ENCODE measurements at regions of chr9 and their contacts with region 1.

Region 1: DNA sequence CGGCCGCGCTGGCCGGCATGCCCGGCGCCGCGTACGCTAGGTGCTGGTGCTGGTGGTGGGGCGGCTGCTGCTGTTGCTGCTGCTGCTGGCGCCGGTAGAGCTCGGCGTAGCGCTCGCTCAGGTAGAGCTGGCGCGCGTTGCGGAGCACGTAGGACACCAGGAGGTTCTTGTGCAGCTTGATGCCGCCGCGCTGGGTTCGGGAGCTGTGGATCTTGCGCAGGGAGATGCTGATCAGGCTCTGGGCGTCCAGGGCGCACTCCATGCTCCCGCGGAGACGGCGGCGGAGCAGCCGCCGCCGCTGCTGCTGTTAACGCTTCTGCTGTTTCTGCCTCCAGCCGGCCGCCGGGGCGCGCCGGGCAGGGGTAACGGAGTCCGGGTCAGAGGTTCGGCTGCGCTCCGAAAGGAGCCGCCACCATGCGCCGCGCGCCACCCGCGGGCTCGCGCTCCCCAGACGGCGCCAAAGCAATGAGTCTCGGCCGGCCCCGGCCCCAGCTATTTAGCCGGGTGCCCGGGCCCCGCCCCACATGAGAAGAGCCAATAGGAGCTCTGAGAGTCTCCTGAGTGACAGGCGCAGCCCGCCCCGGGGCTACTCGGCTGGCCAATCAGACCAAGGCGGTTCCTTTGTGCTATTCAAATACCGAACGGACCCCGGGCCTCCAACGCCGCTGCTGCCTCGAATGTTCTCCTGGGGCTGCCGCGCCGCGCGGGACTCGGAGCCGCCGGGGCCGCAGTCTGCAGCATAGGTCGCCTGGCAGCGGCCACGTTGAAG is at the start of gene IER5L:
- DNase-seq: peak; percentile 94
- ATAC-seq: peak; percentile 70
- H3K4me3 ChIP-seq: peak within 1 kb of the TSS; percentile 89
- H3K27ac ChIP-seq: peak within 1 kb of the TSS; percentile 97
- H3K4me1 ChIP-seq: peaks cover 9% of the 10 kb centered on the region
- H3K27me3 ChIP-seq: no peaks in the 10 kb centered on the region
- CTCF ChIP-seq: 0 out of 2 replicates have a peak, but pooled peaks have one; percentile 3
- POLR2A ChIP-seq: peak; percentile 100
- RAD21 ChIP-seq: 0 out of 2 replicates have a peak, but pooled peaks have one; percentile 4
- total RNA-seq, gene IER5L: 12.5 and 14.4 TPM in 2 replicates

Region 2: DNA sequence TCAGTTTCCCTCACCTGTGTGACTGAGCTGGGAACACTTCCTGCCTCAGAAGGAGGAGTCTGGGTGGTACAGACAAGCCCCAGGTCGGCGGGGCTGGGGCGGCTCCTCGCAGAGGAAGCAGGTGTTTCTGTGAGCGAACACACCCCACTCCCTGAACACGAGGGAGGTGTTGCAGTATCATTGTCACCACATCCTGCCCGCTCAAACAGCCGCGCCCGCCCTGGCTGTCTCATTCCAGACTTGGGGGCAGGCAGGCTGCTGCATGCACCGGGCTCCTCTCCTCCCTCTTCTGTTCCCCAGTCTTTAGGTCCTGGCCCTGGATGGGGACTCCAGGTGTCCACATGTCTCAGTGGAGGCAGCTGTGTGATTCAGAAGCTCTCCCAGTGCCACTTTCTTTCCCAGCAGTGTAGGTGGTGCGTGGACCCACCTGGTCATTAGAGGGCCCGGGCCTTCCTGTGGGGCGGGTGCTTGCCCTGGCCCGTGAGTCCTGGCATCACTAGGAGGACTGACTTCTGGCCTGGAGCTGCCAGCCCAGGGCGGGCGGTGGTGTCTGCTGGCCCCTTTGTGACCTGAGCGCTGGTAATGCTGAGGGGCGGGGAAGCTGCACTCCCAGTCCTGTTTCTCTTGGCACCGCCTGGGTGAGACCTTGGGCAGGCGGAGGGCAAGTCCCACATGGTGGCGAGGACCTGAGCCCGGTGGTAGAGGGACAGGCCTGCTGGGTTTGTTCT is 275.5 kb before region 1 on chr9:
- CTCF ChIA-PET with region 1: no interaction called
- POLR2A ChIA-PET with region 1: no interaction called
- dilution Hi-C with region 1: no loop called
- in situ Hi-C with region 1: no loop called
- intact Hi-C with region 1: no loop called
- DNase-seq: no peak
- ATAC-seq: no peak
- H3K4me3 ChIP-seq: no peak overlapping the region
- H3K27ac ChIP-seq: no peak overlapping the region
- H3K4me1 ChIP-seq: peaks cover 4% of the 10 kb centered on the region
- H3K27me3 ChIP-seq: no peaks in the 10 kb centered on the region
- CTCF ChIP-seq: no peak
- POLR2A ChIP-seq: no peak
- RAD21 ChIP-seq: no peak

Region 3: GRCh38 chr9:129068990-129069861 is 108.7 kb before region 1 on chr9:
- CTCF ChIA-PET with region 1: no interaction called
- POLR2A ChIA-PET with region 1: interaction called, 12 read pairs
- dilution Hi-C with region 1: no loop called
- in situ Hi-C with region 1: no loop called
- intact Hi-C with region 1: no loop called
- DNase-seq: no peak
- ATAC-seq: no peak
- H3K4me3 ChIP-seq: no peak overlapping the region
- H3K27ac ChIP-seq: no peak overlapping the region
- H3K4me1 ChIP-seq: no peaks in the 10 kb centered on the region
- H3K27me3 ChIP-seq: no peaks in the 10 kb centered on the region
- CTCF ChIP-seq: no peak
- POLR2A ChIP-seq: no peak
- RAD21 ChIP-seq: no peak

Region 4: DNA sequence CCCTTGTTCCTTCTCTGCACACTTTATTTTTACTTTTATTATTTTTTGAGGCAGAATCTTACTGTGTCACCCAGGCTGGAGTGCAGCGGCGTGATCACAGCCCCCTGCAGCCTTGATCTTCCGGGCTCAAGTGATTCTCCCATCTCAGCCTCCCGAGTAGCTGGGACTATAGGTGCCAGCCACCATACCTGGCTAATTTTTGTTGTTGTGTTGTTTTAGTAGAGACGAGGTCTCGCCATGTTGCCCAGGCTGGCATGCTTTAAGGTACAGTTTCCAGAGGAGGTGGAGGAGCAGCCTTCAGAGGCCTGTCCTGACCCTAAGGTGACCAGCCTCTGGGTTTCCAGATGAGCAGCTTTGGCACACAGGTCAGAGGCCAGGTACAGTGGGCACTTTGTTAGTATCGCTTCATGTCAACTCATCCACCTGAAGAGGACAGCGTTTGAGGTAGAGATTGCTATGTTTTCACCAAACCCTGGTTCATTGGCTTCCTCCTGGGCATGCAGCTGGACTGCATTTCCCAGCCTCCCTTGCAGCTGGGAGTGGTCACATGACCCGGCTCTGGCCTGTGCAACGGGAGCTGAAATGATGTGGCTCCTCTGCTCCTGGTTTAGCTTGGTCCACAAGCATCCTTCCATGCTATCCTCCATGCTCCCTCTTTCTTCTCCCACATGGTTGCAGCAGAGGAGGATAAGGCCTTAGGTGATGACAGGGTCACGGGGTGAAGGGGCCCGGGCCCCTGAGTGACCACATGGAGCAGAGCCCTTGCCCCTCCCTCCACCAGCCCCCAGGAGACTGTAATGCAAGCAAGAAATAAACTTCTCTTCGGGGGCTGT is 139.4 kb after region 1 on chr9:
- CTCF ChIA-PET with region 1: interaction called, 3 read pairs
- POLR2A ChIA-PET with region 1: no interaction called
- dilution Hi-C with region 1: no loop called
- in situ Hi-C with region 1: no loop called
- intact Hi-C with region 1: loop called (anchors 5 kb)
- DNase-seq: peak; percentile 45
- ATAC-seq: peak; percentile 25; the same call in 1 of the 2 replicates
- H3K4me3 ChIP-seq: no peak overlapping the region
- H3K27ac ChIP-seq: peak overlapping the region; percentile 26; the same call in 1 of the 2 replicates
- H3K4me1 ChIP-seq: peaks cover 29% of the 10 kb centered on the region
- H3K27me3 ChIP-seq: no peaks in the 10 kb centered on the region
- CTCF ChIP-seq: no peak
- POLR2A ChIP-seq: no peak
- RAD21 ChIP-seq: no peak

Region 5: GRCh38 chr9:129413537-129414376 is 235.8 kb after region 1 on chr9:
- CTCF ChIA-PET with region 1: no interaction called
- POLR2A ChIA-PET with region 1: no interaction called
- dilution Hi-C with region 1: no loop called
- in situ Hi-C with region 1: no loop called
- intact Hi-C with region 1: loop called (anchors 2 kb)
- DNase-seq: peak; percentile 94
- ATAC-seq: peak; percentile 92
- H3K4me3 ChIP-seq: peak overlapping the region; percentile 32
- H3K27ac ChIP-seq: peak overlapping the region; percentile 99
- H3K4me1 ChIP-seq: peaks cover 21% of the 10 kb centered on the region
- H3K27me3 ChIP-seq: no peaks in the 10 kb centered on the region
- CTCF ChIP-seq: no peak
- POLR2A ChIP-seq: peak; percentile 46; the same call in 1 of the 2 replicates
- RAD21 ChIP-seq: no peak; the same call in 1 of the 2 replicates

Region 6: DNA sequence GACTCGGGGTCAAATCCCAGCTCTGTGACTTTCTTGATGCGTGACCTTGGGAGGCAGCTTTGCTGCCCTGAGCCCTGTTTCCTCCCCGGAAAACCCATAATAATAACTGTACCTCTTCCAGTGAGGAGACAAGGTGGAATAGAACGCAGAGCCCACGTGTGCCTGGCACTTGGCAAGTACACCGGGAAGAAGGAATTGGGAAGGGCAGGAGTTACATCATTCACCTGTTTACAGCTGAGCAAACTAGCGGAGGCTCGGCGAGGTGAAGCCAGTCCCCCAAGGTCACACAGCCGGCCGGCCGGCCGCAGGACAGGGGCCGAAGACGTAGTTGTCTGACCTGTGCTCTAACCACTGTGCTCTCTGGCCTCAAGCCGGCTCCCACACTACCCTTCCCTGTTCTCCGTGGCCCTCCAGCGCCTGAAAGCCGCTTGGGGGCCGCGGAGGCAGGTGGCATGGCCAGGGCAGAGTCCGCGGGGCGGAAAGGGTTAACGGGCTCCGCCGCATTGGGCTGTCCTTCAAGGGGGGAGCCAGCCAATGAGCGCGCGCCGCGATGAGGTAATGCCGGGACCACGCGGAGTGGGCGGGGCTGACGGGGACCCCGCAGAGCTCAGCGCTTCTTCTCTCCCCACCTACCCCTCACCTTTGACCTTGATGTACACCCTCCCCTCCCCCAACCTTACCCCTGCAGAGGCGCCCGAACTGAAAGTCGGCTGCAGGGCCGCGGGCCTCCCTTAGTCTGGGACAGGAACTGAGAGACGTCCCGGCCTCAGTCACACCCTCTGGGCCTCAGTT is 317.8 kb after region 1 on chr9:
- CTCF ChIA-PET with region 1: interaction called, 3 read pairs
- POLR2A ChIA-PET with region 1: interaction called, 12 read pairs
- dilution Hi-C with region 1: no loop called
- in situ Hi-C with region 1: no loop called
- intact Hi-C with region 1: loop called (anchors 1 kb)
- DNase-seq: peak; percentile 84
- ATAC-seq: peak; percentile 75
- H3K4me3 ChIP-seq: peak overlapping the region; percentile 22
- H3K27ac ChIP-seq: peak overlapping the region; percentile 99
- H3K4me1 ChIP-seq: peaks cover 49% of the 10 kb centered on the region
- H3K27me3 ChIP-seq: no peaks in the 10 kb centered on the region
- CTCF ChIP-seq: no peak
- POLR2A ChIP-seq: no peak
- RAD21 ChIP-seq: no peak; the same call in 1 of the 2 replicates

Region 7: GRCh38 chr9:129569502-129570449 is 391.8 kb after region 1 on chr9:
- CTCF ChIA-PET with region 1: interaction called, 5 read pairs
- POLR2A ChIA-PET with region 1: interaction called, 3 read pairs
- dilution Hi-C with region 1: no loop called
- in situ Hi-C with region 1: no loop called
- intact Hi-C with region 1: loop called (anchors 1 kb)
- DNase-seq: peak; percentile 36
- ATAC-seq: no peak
- H3K4me3 ChIP-seq: no peak overlapping the region
- H3K27ac ChIP-seq: peak overlapping the region; percentile 91
- H3K4me1 ChIP-seq: peaks cover 30% of the 10 kb centered on the region
- H3K27me3 ChIP-seq: no peaks in the 10 kb centered on the region
- CTCF ChIP-seq: peak; percentile 41
- POLR2A ChIP-seq: no peak
- RAD21 ChIP-seq: no peak; the same call in 1 of the 2 replicates

Region 8: GRCh38 chr9:129604772-129605171 is 426.8 kb after region 1 on chr9:
- CTCF ChIA-PET with region 1: no interaction called
- POLR2A ChIA-PET with region 1: no interaction called
- dilution Hi-C with region 1: no loop called
- in situ Hi-C with region 1: no loop called
- intact Hi-C with region 1: no loop called
- DNase-seq: no peak
- ATAC-seq: no peak
- H3K4me3 ChIP-seq: no peak overlapping the region
- H3K27ac ChIP-seq: no peak overlapping the region
- H3K4me1 ChIP-seq: peaks cover 9% of the 10 kb centered on the region
- H3K27me3 ChIP-seq: no peaks in the 10 kb centered on the region
- CTCF ChIP-seq: no peak
- POLR2A ChIP-seq: no peak
- RAD21 ChIP-seq: no peak